ENCODE measurements at regions of chr1 and their contacts with region 1.

Region 1: DNA sequence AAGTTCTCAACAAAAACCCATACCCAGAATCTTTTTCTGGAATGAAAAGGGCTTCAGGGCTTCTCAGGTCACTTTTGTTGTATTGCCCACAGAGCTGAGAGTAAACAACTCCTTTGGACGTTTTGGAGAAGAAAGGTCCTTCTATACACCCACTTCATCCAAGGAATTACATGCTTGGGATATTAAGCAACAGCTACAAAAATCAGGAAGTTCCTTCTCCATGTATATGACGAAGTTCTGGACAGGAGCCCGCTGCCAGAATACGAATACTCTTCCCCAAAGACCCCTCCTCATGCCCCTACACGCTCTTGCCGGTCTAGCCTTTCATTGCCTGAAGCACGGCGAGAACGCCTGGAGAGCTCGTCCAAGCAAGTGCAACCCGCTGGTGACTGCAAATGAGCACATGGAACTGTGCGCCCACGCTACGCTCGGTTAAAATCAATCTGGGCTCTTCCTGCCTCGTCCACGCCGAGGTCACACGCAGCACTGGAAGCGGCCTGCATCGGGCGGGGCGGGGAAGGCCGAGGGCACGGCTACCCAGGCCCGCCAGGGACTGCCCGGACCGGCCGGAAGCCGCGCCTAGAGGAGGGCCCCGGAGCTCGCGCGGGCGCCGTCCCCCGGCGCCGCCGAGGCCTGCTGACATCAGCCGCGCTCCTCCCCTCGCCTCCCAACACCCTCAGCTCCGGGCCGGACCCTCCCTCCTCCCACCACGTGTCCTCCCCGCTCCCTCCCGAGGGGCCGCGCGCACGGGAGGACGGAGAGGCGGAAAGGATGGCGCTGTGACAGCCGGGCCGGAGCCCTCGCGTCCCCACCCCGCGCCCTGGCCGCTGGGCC is at the start of gene POGK:
- DNase-seq: peak; percentile 96
- ATAC-seq: peak; percentile 95
- total RNA-seq, gene POGK: 15.6 TPM

Region 2: DNA sequence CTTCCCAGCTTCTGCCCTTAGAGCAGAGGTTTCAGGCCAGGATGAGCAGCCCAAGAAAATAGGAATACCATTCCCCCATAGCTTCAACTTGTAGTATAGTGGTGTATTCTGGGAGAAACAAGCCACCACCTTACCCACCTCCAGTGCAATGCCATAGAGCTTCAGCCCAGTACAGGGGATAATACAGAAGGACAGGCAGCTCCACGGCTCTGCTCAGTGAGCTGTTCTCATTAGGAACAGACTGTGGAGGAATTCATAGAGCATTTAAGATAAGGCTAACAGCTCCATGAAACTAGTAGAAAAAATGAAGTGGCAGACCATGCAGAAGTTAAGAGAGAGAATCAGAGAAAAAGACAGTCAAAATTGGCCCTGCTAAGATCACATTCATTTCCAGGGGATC is 294.4 kb before region 1 on chr1:
- intact Hi-C with region 1: no loop called
- DNase-seq: peak; percentile 16
- ATAC-seq: peak; percentile 52

Region 3: DNA sequence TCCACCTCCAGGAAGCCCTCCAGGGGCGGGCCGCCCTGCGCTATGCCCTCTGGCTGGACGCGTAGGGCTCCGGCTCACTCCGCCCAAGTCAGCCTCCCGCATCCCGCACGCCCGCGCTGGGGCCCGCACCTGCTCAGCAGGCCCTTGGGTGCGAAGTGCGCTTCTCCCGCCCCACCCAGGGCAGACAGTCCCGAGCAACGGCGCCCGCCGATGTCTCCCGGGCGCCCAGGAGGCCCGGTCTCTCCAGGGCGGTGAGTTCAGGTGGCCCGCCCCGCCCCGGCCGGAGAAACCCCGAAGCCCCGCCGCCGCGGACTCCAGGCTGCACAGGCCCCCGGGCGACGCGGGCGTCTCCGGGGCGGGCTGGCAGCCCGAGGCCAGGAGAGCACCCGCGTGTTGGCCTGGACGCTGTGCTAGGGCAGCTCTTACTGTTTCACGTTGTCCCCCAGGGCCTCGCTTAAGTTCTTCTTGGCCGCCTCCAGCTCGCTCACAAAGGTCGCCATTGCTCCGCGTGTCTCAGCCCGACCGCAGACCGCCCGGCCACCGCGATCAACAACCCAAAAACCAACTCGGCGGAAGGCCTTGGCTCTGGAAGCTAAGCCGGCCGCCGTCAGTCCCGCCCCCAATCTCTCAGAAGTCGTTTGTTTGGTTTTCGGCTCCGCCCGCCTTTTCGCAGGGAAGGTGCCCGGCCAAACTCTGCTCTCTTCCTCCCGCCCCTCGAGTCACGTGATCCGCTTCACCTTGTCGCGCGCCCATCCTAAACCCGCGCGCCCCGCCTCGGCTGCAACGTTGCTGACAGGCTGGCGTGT is 37.0 kb after region 1 on chr1 and contains the start of gene TADA1:
- intact Hi-C with region 1: loop called (anchors 2 kb)
- DNase-seq: peak; percentile 99
- ATAC-seq: peak; percentile 97
- total RNA-seq, gene TADA1: 9.6 TPM

Region 4: DNA sequence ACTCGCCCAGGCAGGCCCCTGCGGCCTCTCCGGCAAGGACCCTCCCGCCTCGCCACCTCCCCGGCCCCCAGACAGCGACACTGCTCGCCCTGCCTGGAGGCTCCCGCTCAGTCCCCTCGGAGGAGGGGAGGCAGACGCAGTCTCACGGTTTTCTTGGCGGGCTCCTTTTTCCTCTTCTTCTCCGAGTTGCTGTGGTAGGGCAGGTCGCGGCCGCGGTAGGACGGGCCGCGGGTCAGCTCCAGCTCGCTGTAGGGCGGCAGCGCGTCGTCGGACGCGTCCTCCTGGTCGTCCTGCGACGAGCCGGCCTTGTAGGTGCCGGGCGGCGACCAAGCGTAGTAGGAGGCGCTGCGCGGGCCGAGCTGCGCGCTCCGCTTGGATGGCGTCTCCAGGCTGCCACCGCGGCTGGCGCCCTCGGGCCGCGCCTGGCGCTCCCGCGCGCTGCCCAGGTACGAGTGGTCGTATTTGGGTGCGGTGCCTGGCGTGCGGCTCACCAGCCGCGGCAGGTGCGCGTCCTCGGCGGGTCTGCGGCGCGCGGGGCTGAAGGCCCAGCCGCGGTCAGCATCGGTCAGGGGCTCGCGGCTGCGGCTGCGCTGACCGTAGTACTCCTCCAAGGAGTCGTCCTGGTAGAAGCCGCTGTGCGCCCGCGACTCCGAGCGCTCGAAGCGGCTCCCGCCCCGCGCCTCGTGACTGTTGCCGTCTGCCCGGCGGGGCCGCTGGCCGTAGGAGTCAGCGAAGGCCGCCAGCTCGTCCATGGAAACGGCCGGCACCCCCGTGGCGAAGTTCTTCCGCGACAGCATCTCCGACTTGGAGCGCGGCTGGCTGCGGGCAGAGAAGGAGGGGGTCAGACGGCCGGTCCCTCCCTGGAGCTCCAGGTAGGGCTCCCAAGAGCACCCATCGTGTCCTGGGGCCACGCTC is 81.8 kb after region 1 on chr1:
- intact Hi-C with region 1: no loop called
- DNase-seq: peak; percentile 50
- ATAC-seq: peak; percentile 79